Activated CD4-positive, alpha-beta T cell treated with anti-CD3 and anti-CD28 coated beads, Interleukin-2, amount 10 ng/mL, durations not matched to agents 24 days and 14 days (primary cell): ENCODE measurements at regions of chr2 and their contacts with region 1.

Region 1: DNA sequence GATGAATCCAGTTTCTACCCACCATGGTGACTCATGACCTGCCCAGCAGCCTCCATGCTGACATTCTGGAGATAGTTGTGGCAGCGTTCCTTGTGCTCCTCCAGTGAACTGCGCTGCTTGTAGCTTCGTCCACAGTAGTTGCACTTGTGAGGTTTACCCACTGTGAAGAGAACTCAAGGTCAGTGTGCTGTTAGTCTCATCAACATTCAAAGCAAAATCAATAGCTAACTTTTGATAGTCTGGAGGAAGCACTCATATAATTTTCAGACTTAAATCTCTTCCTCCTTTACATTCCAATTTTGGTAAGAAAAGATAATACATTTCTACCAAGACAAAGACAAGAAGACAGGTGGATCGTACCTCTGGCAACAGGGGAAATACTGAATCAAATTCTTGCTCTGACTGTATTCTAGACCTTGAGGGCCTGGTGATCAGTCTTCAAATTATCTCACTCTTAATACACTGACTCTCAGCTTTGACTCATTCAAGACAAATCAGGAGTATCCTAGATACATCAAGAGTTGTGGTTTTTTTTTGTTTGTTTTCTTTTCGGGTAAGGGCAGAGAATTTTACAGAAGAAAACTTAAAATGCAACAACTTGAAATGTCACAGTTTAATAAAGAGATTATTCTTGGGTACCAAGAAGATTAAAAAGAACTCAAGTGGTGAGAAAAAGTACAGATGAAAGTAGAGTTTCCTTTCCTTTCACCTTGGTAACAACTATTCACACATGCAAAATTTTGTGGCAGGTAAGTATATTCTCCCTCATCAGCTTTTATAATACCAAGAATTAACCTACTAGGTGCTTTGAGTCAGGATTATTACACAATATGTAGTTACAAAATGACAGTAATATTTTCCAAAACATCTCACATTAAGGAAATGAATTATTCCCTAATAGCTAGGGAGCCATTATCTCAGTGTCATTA is 129.2 kb downstream of the IKZF2 start:
- DNase-seq: no peak
- H3K4me3 Mint-ChIP-seq: no peak overlapping the region
- H3K27ac Mint-ChIP-seq: peak overlapping the region; percentile 22
- H3K4me1 Mint-ChIP-seq: peaks cover 5% of the 10 kb centered on the region
- H3K27me3 Mint-ChIP-seq: peaks cover 19% of the 10 kb centered on the region

Region 2: DNA sequence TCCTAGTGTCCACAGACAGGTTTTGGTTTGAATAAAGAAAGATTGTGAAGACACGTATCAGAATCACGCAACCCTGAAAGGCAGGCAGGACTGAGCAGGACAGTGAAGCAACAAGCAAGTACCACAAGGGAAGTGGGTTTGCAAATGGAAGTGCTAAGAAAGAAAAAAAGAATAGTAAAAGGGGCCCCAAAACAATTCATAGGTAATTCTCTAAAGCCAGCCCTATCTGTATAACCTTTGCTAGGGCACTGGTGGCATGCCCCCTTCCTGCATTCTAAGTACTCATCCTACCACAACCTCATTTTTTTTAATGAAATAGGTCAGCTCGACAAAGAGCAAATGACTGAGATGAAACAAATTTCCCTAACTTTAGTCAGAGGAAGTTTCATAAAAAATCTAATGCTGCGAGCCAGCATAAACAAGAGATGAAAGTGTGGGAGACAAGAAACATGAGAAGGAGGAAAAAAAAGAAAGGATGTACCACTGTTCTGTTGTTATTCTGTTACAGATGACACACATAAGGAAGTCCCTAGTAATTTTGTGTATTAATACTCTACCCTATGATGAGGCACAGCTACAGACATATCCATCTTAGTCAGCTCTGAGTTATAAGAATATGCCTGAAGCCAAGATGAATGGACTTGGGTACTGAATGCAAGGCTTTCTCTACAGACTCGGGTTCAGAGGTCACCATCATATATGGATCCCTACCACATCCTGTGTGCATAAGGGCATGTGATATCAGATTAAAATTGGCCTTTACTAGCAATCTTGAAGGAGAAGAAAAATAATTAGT is 97.0 kb after region 1 on chr2:
- intact Hi-C with region 1: loop called (anchors 1 kb)
- DNase-seq: peak; percentile 58
- H3K4me3 Mint-ChIP-seq: peak overlapping the region; percentile 8
- H3K27ac Mint-ChIP-seq: peak overlapping the region; percentile 86
- H3K4me1 Mint-ChIP-seq: peaks cover 15% of the 10 kb centered on the region
- H3K27me3 Mint-ChIP-seq: peaks cover 1% of the 10 kb centered on the region